ENCODE measurements at regions of chr9 and their contacts with region 1.

Region 1: GRCh38 chr9:85554349-85554748 is 187.4 kb downstream of the AGTPBP1 start:
- DNase-seq: peak; percentile 17
- CTCF ChIP-seq: no peak

Region 2: DNA sequence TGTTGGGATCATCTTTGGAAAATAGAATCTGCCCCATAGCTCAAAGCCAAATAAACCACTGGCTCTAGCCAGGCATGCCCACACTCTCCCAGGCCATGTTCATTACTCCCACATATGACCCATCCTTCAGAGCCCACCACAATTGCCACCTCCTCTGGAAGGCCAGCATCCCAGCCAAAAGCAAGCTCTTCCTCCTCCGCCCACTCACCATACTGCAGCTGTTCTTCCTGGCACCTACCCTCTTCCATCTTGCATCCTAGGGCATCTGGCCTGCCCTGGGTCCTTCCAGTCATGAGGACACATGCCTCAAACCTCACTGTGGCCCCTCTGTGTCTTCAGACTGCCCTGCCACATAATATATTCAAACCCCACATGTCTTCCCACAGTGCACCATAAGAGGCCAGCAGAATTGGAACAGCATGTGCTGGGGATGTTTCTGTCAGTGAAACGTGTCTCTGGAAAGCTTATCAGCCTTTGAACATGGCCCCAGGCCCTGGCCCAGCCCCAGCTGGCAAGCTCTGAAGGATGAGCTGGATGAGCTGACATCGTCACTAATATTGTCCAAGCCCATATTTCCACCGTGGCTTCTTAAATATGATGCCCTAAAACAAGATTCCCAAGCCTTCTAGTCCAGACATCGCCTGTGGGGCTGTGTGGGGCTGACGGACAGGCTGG is 43.4 kb before region 1 on chr9:
- CTCF ChIA-PET with region 1: no interaction called
- POLR2A ChIA-PET with region 1: no interaction called
- DNase-seq: no peak
- CTCF ChIP-seq: no peak

Region 3: DNA sequence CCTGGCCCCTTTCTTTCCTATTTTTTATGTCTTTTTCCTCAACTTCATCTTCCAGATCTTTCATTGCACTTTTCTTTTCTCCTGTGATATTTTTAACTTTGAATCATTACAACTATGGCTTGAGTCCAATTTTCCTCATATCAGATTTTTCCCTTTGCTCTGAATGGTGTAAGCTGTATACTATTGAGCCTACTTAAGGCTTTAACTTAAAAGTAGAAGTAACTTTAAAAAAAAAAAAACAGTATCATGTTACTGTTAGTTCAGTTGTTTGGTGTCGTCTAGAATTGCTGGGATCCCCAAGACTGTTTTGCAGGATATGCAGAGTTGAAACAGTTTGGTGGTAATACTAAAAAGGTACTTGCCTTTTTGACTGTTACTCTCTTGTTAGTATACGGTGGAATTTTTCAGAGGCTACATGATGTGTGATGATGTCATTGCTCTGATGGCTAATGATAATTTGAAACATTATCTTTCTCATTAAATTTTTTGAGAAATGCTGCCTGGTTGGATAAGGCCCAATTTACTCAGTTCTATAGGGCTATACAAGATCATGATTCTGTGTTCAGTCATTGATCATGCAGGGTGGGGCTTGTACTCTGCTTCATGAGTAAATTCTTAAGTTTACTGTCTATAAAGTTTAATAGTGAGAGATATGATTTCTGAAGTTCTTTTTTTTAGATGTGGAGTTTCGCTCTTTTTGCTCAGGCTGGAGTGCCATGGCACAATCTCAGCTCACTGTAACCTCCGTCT is 395.4 kb after region 1 on chr9:
- CTCF ChIA-PET with region 1: no interaction called
- POLR2A ChIA-PET with region 1: interaction called, 10 read pairs
- DNase-seq: no peak
- CTCF ChIP-seq: no peak